Left lung (tissue), 14 donors: ENCODE measurements at regions of chr14 and their contacts with region 1.

Region 1: GRCh38 chr14:33839193-33840076 is 111.4 kb downstream of the EGLN3 start:
- DNase-seq: peak in 3 of 4 donors; percentile 25 to 65 (median 47)
- ATAC-seq: peak; percentile 86
- H3K4me3 ChIP-seq: no peak overlapping the region
- H3K27ac ChIP-seq: no peak overlapping the region
- H3K4me1 ChIP-seq: no peaks in the 10 kb centered on the region
- H3K27me3 ChIP-seq: no peaks in the 10 kb centered on the region
- CTCF ChIP-seq: peak; percentile 79 to 83

Region 2: DNA sequence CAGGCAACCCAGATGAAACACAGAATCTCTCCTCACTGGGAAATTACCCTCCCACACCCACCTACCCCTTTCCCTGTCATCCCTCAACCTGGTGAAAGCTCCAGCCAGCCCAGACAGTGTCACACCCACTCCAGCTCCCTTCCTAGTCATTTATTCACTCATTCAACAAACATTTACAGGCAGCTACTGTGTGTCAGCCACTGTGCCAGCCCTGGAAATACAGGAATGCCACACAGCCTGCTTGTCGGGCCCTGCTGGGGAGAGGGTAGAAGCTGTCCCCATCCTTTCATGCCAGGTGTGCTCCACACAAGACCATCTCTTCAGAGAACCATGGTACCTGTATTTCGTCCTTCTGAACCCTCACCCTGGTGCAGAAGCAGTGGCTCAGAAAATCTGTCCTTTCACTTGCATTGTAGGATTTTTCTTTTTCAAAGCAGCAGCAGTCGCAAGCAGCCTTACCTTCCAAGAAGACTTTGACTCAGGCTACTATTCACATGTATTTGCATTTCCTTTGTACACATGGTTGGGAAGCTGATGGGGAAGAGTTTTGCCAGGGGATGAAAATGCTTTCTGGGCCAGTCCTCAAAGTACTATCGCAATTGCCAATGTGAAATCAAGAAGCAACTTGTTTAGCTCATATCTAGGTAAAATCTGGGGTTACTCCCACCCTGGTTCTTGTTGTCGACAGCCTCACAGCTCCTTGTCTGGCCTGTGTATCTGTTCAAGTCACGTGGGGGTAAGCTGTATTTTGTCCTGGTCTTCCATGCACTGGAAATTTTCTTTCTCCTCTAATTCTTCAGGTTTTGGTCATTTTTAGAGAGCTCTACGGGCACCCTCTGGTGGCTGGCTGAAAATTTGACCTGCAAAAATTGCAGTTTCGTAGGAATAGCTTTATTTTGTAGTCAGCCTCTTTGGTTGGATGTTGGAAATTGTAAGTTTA is 258.9 kb after region 1 on chr14:
- intact Hi-C with region 1: loop called in 1 of 2 experiments (anchors 5 kb)
- DNase-seq: peak in 2 of 4 donors; percentile 51 to 59
- ATAC-seq: peak; percentile 44
- H3K4me3 ChIP-seq: no peak overlapping the region
- H3K27ac ChIP-seq: no peak overlapping the region
- H3K4me1 ChIP-seq: no peaks in the 10 kb centered on the region
- H3K27me3 ChIP-seq: no peaks in the 10 kb centered on the region
- CTCF ChIP-seq: peak; percentile 27 to 41

Region 3: GRCh38 chr14:34227834-34228649 is 388.6 kb after region 1 on chr14:
- intact Hi-C with region 1: loop called in 1 of 2 experiments (anchors 10 kb)
- DNase-seq: peak; percentile 43 to 68 (median 58)
- ATAC-seq: peak; percentile 99
- H3K4me3 ChIP-seq: no peak overlapping the region
- H3K27ac ChIP-seq: no peak overlapping the region
- H3K4me1 ChIP-seq: peaks cover 0 to 2% of the 10 kb centered on the region in 2 donors
- H3K27me3 ChIP-seq: peaks cover 0 to 3% of the 10 kb centered on the region in 2 donors
- CTCF ChIP-seq: peak; percentile 80 to 84

Region 4: DNA sequence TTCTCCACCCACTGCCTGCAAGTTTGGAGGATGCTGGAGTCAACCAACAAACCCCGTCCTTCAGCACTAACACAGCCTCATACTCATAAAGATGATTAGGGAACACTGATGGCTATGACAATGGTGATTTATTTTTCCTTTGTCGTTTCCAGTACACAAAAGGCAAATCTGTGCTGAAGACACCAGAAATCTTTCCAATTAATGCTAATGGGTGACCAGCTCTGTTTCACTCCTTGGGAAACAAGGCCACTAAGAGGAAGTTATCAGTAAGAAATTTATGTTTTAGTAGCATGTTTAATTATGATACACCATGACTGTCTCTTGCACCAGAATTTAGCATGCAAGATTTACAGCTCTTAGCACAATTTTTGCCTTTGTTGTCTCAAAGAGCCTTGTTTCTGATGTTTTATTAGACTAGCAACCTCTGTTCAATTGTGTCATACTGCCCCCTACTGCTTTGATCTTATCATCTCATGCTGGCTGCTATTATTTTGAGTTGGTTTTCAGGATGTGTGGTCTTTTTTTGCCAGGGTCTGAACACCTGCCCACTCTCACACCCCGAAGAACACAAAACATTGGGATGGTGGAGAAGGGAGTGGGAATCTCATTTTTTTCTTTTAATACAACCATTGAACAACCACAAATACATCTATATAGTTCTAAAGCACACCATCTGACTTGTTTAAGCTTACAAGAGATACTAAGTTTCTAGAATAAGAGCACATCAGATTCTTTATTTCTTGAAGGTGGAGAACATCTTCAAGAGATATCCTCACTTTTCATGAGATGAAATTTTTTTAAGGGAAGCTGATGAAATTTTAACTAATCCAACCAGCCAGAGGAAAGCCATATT is 461.7 kb after region 1 on chr14:
- intact Hi-C with region 1: loop called in 1 of 2 experiments (anchors 10 kb)
- DNase-seq: peak in 1 of 4 donors; percentile 40
- ATAC-seq: peak; percentile 74
- H3K4me3 ChIP-seq: no peak overlapping the region
- H3K27ac ChIP-seq: no peak overlapping the region
- H3K4me1 ChIP-seq: no peaks in the 10 kb centered on the region
- H3K27me3 ChIP-seq: no peaks in the 10 kb centered on the region
- CTCF ChIP-seq: peak; percentile 41 to 59